ENCODE measurements at regions of chr3 and their contacts with region 1.

Region 1: DNA sequence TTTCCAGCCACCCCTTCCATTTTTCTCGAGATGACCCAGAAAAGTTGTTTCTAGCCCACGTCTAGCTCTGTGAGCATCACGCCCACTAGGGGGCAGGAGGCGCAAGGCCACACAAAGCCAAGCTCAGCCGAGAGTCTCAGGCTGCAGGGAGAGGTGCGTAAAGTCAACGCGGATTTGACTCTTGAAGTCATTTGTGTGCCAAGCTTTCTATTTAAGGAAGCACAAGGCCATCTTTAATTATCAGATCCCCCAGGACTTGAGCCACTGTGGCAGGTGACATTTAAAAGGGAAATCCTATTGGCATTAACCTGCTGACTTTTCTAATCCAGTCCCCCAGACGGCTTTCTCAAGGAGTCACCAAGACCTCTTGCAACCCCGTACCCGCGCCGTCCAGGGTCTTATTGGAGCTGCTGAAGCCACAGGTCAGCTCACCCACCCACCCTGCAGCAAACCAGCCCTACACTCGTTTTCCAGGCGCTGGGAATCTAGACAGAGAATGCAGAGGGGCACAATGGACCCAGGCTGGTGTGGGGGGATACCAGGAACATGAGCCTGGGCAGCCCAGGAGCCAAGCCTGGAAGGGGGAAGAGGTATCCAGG is 62.1 kb downstream of the CAPN7 start:
- H3K4me3 Mint-ChIP-seq: no peak overlapping the region
- H3K27ac Mint-ChIP-seq: no peak overlapping the region
- H3K4me1 Mint-ChIP-seq: peaks cover 45% of the 10 kb centered on the region
- H3K27me3 Mint-ChIP-seq: no peaks in the 10 kb centered on the region

Region 2: GRCh38 chr3:15120986-15121385 is 147.1 kb before region 1 on chr3:
- intact Hi-C with region 1: no loop called
- H3K4me3 Mint-ChIP-seq: no peak overlapping the region
- H3K27ac Mint-ChIP-seq: no peak overlapping the region
- H3K4me1 Mint-ChIP-seq: peaks cover 10% of the 10 kb centered on the region
- H3K27me3 Mint-ChIP-seq: peaks cover 11% of the 10 kb centered on the region

Region 3: DNA sequence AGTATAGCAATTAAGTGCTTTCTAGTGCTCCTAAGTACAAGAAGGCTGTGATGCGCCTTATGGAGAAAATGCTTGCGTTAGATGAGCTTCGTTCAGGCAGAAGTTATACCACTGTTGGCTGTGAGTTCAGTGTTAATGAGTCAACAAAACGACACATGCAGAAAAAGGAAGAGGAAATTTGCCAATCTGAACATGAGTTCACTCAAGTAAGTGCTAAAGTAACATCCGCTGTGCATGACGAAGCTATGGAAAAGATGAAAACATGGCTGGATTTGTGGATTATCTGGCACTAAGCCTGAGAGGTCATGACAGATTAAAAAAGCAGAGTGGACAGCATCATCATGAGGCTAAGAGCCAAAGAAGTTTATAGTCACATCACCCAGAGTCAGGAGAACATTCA is 27.4 kb after region 1 on chr3:
- intact Hi-C with region 1: loop called (anchors 2 kb)
- H3K4me3 Mint-ChIP-seq: no peak overlapping the region
- H3K27ac Mint-ChIP-seq: peak overlapping the region; percentile 94
- H3K4me1 Mint-ChIP-seq: peaks cover 79% of the 10 kb centered on the region
- H3K27me3 Mint-ChIP-seq: no peaks in the 10 kb centered on the region

Region 4: GRCh38 chr3:15332405-15333098 is 64.4 kb after region 1 on chr3 and contains the start of gene SH3BP5:
- intact Hi-C with region 1: loop called (anchors 1 kb)
- H3K4me3 Mint-ChIP-seq: peak within 1 kb of the TSS; percentile 90
- H3K27ac Mint-ChIP-seq: peak within 1 kb of the TSS; percentile 73
- H3K4me1 Mint-ChIP-seq: peaks cover 33% of the 10 kb centered on the region
- H3K27me3 Mint-ChIP-seq: peaks cover 24% of the 10 kb centered on the region

Region 5: DNA sequence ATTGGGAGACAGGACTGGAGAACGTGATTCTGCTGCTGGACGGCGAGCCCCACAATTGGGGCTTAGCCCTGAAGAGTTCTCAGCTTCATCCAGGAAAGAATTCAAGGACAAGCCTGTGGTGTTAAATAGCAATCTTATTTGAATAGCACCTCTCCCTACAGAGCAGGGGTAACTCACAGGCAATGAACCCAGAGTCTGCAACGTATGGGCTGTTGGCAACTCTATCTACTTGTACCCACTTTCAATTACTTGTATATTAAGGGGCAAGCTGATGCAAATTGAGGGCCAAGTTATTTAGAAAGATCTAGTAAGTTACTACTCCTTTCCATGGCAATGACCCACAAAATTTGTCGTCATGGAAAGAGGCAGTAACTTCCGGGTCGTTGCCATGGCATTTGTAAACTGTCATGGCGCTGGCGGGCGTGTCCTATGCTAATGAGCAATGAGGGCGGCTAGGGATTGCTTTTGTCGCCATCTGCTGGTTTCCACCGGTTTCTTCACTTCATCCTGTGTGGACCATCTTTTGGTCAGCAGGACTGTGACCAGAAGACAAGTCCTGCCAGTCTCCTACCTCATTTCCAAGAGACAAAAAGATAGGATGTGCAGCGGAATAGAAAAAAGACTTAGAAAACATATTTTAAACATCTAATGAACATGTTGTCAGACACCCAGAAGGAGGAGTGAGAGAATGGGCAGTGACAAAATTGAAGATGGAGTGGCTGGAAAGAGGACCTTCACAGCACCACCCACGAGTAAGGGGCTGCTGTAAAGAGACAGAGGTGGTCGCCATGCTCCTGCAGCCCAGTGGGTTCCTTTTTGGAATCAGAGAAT is 110.0 kb after region 1 on chr3:
- intact Hi-C with region 1: loop called (anchors 1 kb)
- H3K4me3 Mint-ChIP-seq: no peak overlapping the region
- H3K27ac Mint-ChIP-seq: peak overlapping the region; percentile 74
- H3K4me1 Mint-ChIP-seq: peaks cover 24% of the 10 kb centered on the region
- H3K27me3 Mint-ChIP-seq: no peaks in the 10 kb centered on the region

Region 6: DNA sequence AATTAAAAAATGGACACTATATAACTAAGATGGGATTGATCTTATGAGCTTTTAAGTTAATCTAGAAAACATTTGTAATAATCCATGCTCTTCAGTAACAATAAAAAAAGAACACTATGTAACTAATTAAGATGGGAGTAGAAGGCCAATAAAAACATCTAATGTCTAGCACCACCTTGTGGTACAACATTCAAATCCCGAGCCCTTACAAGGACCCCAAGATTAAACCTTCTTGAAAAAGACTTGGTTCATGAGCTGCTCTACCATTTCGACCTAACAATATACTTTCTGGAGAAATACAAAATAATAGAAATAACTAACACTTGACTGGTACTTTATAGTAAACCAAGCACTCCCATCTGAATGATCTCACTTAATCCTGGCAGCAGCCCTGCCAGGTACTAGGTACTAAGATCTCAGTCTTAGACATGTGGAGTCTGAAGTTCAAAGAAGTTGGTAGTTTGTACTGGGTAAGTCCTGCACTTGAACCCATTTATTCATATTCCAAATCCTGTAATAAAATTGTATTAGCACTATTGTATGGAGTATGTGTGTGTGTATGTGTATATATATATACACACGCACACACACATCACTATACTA is 137.4 kb after region 1 on chr3:
- intact Hi-C with region 1: loop called (anchors 1 kb)
- H3K4me3 Mint-ChIP-seq: no peak overlapping the region
- H3K27ac Mint-ChIP-seq: no peak overlapping the region
- H3K4me1 Mint-ChIP-seq: peaks cover 45% of the 10 kb centered on the region
- H3K27me3 Mint-ChIP-seq: no peaks in the 10 kb centered on the region

Region 7: DNA sequence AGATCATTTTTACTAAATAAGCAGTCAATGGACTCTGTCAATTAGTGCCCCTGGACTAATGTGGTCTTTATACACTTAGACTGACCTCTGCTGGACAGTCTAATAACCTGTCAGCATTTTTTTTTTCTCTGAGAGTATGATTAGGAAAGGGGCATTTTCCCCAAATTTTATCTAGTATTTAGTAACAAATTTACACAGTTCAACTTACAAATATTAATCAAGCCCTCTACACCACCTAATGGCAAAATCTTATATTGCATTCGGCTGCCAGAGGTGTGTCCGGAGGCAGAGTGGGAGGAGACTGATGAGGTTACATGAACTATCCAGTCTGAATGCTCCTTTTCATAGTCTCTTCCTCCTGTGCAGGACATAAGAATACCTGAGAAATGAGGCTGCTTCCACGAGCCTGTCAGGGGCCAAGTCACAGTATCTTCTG is 289.4 kb after region 1 on chr3:
- intact Hi-C with region 1: loop called (anchors 2 kb)
- H3K4me3 Mint-ChIP-seq: no peak overlapping the region
- H3K27ac Mint-ChIP-seq: no peak overlapping the region
- H3K4me1 Mint-ChIP-seq: peaks cover 21% of the 10 kb centered on the region
- H3K27me3 Mint-ChIP-seq: no peaks in the 10 kb centered on the region

Measured in dendritic cell treated with granulocyte-macrophage colony-stimulating factor and Interleukin-4, amounts not matched to agents 40 ng/mL and 50 ng/mL, for 4 days (primary cell).